Left lung (tissue), 14 donors: ENCODE measurements at regions of chr4 and their contacts with region 1.

Region 1: DNA sequence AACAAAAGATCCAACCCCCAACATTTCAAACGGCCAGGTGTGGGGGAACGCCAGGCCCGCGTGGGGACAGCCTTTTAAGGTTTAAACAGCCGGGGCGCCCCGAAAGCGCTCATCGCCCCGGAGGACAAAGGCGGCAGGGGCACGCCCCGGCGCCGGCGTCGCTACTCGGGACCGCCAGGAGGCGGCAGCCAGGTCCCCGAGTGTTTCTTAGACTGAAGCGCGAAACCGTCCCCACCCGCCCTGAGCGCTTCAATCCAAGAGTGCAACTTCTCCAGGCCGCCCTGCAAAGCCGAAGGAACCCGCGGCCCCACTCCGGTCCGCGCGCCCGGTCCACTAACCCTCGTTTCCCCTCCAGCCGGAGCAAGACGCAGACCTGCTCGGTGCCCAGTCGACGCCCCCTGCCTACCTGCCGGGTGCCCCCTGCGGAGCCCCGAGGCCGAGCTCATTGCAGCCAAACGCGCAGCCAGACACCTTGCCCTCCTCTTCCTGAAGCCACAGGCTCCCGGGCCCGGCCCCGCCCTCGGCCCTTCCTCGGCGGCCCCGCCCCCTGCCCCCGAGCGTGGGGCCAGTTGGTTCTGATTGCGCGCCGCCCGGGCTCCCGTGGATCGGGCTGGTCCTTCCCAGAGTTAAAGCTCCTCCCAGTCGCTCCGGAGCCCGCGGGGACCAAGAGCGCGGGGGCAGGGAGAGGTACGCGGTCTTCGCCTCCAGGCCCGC is at the start of gene CASP6:
- DNase-seq: peak; percentile 73 to 98 (median 88)
- ATAC-seq: peak; percentile 96
- H3K4me3 ChIP-seq: peak within 1 kb of the TSS; percentile 79 to 81
- H3K27ac ChIP-seq: peak within 1 kb of the TSS; percentile 88 to 92
- H3K4me1 ChIP-seq: peaks cover 8 to 25% of the 10 kb centered on the region in 2 donors
- H3K27me3 ChIP-seq: no peaks in the 10 kb centered on the region
- CTCF ChIP-seq: peak; percentile 59 to 78
- polyA plus RNA-seq, gene CASP6: 40.2 to 53.4 (median 45.0) TPM

Region 2: GRCh38 chr4:109433205-109434006 is 269.7 kb before region 1 on chr4 and contains the start of gene SEC24B:
- intact Hi-C with region 1: loop called in 1 of 2 experiments (anchors 10 kb)
- DNase-seq: peak; percentile 87 to 98 (median 92)
- ATAC-seq: peak; percentile 95
- H3K4me3 ChIP-seq: peak within 1 kb of the TSS; percentile 82 to 84
- H3K27ac ChIP-seq: peak within 1 kb of the TSS; percentile 94 to 97
- H3K4me1 ChIP-seq: peaks cover 20 to 34% of the 10 kb centered on the region in 2 donors
- H3K27me3 ChIP-seq: no peaks in the 10 kb centered on the region
- CTCF ChIP-seq: peak; percentile 90 to 94
- polyA plus RNA-seq, gene SEC24B: 35.6 to 42.8 (median 38.3) TPM

Region 3: GRCh38 chr4:109608879-109609278 is 94.2 kb before region 1 on chr4:
- intact Hi-C with region 1: no loop called
- DNase-seq: no peak
- ATAC-seq: no peak
- H3K4me3 ChIP-seq: no peak overlapping the region
- H3K27ac ChIP-seq: no peak overlapping the region
- H3K4me1 ChIP-seq: no peaks in the 10 kb centered on the region
- H3K27me3 ChIP-seq: no peaks in the 10 kb centered on the region
- CTCF ChIP-seq: no peak

Region 4: GRCh38 chr4:109721033-109721432 is 17.9 kb after region 1 on chr4:
- intact Hi-C with region 1: no loop called
- DNase-seq: no peak
- ATAC-seq: no peak
- H3K4me3 ChIP-seq: no peak overlapping the region
- H3K27ac ChIP-seq: no peak overlapping the region
- H3K4me1 ChIP-seq: no peaks in the 10 kb centered on the region
- H3K27me3 ChIP-seq: no peaks in the 10 kb centered on the region
- CTCF ChIP-seq: no peak

Region 5: GRCh38 chr4:109754093-109754857 is 51.2 kb after region 1 on chr4:
- intact Hi-C with region 1: no loop called
- DNase-seq: no peak
- ATAC-seq: no peak
- H3K4me3 ChIP-seq: no peak overlapping the region
- H3K27ac ChIP-seq: no peak overlapping the region
- H3K4me1 ChIP-seq: no peaks in the 10 kb centered on the region
- H3K27me3 ChIP-seq: no peaks in the 10 kb centered on the region
- CTCF ChIP-seq: no peak